ENCODE measurements at regions of chr18 and their contacts with region 1.

Region 1: GRCh38 chr18:22983175-22983574 is 50.0 kb downstream of the RBBP8 start:
- DNase-seq: no peak
- ATAC-seq: no peak

Region 2: GRCh38 chr18:22796069-22796468 is 187.1 kb before region 1 on chr18:
- intact Hi-C with region 1: loop called in 1 of 2 experiments (anchors 5 kb)
- DNase-seq: no peak
- ATAC-seq: no peak

Region 3: DNA sequence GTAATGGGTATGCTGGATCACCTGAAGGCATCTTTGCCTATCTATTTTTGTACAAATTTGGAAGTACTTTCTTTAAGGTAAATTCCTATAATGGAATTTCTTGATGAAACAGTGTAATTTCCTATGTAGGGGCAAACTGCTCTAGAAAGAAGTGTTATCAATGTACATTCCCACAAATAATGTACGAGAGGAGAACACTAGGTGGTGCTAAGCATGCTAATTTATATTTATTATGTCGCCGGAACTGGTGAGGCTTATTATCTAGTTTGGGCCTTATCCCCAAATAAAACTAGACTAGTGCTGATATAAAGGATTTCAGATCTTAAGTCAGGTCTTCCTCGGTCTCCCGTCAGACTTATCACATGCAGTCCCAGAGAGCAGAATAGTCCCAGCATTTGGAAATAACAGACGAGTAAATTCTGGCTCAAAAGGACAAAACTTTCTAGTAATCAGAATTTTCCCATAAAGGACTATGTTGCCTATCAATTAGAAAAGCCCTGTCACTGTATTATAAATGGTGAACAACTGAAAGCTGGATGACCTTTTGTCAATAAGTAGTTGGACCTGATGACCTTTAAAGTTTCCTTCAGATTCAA is 137.0 kb before region 1 on chr18:
- intact Hi-C with region 1: loop called in 1 of 2 experiments (anchors 5 kb)
- DNase-seq: no peak
- ATAC-seq: peak in 1 of 2 donors; percentile 38

Region 4: DNA sequence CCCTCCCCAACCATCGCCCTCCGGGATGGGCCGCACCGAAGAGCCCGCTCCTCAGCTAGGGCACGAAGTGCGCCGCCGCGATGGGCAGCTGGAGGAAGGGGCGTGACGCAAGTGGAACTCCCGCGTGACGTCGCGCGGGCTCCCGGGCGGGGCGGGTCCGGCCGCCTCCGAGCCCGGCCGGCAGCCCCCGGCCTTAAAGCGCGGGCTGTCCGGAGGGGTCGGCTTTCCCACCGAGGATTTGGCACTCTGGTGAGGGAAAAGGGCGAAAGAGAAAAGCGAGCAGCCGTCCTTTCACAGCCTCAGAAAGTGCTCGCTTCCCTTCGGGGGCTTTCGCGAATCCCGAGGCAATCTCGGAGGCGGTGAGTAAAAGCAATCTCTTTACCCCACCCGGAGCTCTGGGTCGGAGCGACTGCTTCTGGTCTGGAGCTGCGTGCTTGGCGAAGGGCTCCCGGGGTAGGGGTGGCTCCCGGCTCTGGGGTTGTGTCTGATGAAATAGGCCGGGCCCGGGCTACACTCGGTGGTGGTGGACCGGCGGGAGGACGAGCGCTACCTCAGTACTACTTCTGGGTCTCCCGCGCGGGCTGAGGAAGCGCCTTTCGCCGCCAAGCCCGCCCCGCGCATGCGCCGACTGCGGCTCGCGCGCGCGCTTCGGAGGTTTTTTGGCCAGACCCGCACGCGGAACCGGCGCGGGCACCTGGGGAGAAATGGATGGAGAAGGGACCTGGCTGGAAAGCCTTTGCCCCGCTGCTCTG is 49.8 kb before region 1 on chr18 and contains the start of gene RBBP8:
- intact Hi-C with region 1: loop called in 1 of 2 experiments (anchors 5 kb)
- DNase-seq: peak; percentile 90
- ATAC-seq: peak; percentile 97 to 98
- total RNA-seq, gene RBBP8: 7.9 to 9.2 TPM